PC-9 (cell line): ENCODE measurements at regions of chr3 and their contacts with region 1.

Region 1: GRCh38 chr3:108221911-108222852 is at the start of gene IFT57:
- DNase-seq: peak; percentile 98 to 99
- H3K4me3 ChIP-seq: peak within 1 kb of the TSS; percentile 85
- H3K27ac ChIP-seq: peak within 1 kb of the TSS; percentile 28
- H3K4me1 ChIP-seq: peaks cover 27% of the 10 kb centered on the region
- H3K27me3 ChIP-seq: no peaks in the 10 kb centered on the region
- CTCF ChIP-seq: no peak
- total RNA-seq, gene IFT57: 55.2 and 65.7 TPM in 2 replicates

Region 2: GRCh38 chr3:107938143-107938542 is 284.0 kb before region 1 on chr3:
- CTCF ChIA-PET with region 1: no interaction called
- POLR2A ChIA-PET with region 1: no interaction called
- intact Hi-C with region 1: loop called (anchors 5 kb)
- DNase-seq: peak; percentile 48 to 58
- H3K4me3 ChIP-seq: no peak overlapping the region
- H3K27ac ChIP-seq: no peak overlapping the region
- H3K4me1 ChIP-seq: no peaks in the 10 kb centered on the region
- H3K27me3 ChIP-seq: no peaks in the 10 kb centered on the region
- CTCF ChIP-seq: peak; percentile 89

Region 3: GRCh38 chr3:108006077-108006771 is 216.0 kb before region 1 on chr3:
- CTCF ChIA-PET with region 1: no interaction called
- POLR2A ChIA-PET with region 1: no interaction called
- intact Hi-C with region 1: loop called (anchors 1 kb)
- DNase-seq: peak; percentile 86 to 92
- H3K4me3 ChIP-seq: peak overlapping the region; percentile 15; the same call in 1 of the 2 replicates
- H3K27ac ChIP-seq: peak overlapping the region; percentile 19; the same call in 1 of the 2 replicates
- H3K4me1 ChIP-seq: peaks cover 42% of the 10 kb centered on the region
- H3K27me3 ChIP-seq: no peaks in the 10 kb centered on the region
- CTCF ChIP-seq: no peak

Region 4: GRCh38 chr3:108130701-108131474 is 91.3 kb before region 1 on chr3:
- CTCF ChIA-PET with region 1: interaction called, 9 read pairs
- POLR2A ChIA-PET with region 1: no interaction called
- intact Hi-C with region 1: loop called (anchors 1 kb)
- DNase-seq: peak; percentile 15 to 99
- H3K4me3 ChIP-seq: no peak overlapping the region
- H3K27ac ChIP-seq: peak overlapping the region; percentile 84
- H3K4me1 ChIP-seq: peaks cover 46% of the 10 kb centered on the region
- H3K27me3 ChIP-seq: no peaks in the 10 kb centered on the region
- CTCF ChIP-seq: no peak

Region 5: DNA sequence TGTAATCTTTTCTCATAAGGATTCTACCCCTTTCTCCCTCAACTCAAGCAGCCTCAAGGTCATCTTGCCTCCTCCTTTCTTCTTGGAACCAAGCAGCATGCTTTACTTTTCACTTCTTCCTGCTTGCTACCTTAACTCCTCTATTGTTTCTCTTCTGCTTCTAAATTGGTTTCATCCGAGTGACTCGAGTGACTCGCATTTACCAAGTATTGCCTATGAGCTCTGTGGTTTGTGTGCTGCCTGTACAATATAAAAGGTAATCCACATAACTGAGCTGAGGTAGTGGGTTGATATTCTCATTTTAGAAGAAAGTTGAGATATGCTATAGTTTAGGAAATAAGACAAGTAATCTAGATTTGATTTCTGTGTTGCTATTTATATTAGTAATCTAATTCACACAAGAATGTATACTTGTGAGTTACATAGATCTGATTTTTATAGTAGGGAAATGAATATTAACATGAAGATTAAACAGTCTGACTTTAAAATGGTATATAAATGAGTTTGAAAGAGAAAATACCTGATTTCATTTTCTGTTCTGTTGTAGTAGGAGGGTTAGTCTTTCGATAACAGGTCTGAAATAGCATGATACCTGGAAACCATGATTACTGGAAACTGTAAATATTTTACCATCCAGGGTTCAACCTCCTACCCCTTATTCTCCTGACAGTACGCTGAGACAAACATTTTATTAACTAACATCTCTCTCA is 79.7 kb after region 1 on chr3:
- CTCF ChIA-PET with region 1: no interaction called
- POLR2A ChIA-PET with region 1: no interaction called
- intact Hi-C with region 1: loop called (anchors 2 kb)
- DNase-seq: peak in 1 of 2 experiments; percentile 46
- H3K4me3 ChIP-seq: no peak overlapping the region
- H3K27ac ChIP-seq: no peak overlapping the region
- H3K4me1 ChIP-seq: no peaks in the 10 kb centered on the region; the same call in 1 of the 2 replicates
- H3K27me3 ChIP-seq: no peaks in the 10 kb centered on the region
- CTCF ChIP-seq: no peak

Region 6: DNA sequence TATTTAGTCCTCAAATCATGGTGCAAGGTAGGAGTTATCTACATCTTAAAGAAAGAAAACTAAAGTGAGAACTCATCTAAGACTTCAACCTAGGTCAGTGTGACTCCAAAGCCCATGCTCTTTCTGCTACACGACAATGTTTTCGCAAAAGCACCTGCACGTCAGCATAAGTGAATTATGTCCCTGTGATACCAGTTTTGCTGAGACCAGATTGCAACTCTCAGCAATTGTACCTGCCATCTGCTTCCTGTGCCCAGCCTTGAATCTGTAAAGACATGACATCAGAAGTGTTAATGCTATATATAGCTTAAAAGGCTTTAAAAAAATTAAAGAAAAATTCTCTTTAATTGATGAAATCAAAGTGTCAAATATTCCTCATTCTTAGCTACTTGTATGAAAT is 491.6 kb after region 1 on chr3:
- CTCF ChIA-PET with region 1: no interaction called
- POLR2A ChIA-PET with region 1: no interaction called
- intact Hi-C with region 1: no loop called
- DNase-seq: no peak
- H3K4me3 ChIP-seq: no peak overlapping the region
- H3K27ac ChIP-seq: no peak overlapping the region
- H3K4me1 ChIP-seq: no peaks in the 10 kb centered on the region
- H3K27me3 ChIP-seq: peaks cover 20% of the 10 kb centered on the region; the same call in 1 of the 2 replicates
- CTCF ChIP-seq: no peak